ENCODE measurements at regions of chr1 and their contacts with region 1.

Region 1: DNA sequence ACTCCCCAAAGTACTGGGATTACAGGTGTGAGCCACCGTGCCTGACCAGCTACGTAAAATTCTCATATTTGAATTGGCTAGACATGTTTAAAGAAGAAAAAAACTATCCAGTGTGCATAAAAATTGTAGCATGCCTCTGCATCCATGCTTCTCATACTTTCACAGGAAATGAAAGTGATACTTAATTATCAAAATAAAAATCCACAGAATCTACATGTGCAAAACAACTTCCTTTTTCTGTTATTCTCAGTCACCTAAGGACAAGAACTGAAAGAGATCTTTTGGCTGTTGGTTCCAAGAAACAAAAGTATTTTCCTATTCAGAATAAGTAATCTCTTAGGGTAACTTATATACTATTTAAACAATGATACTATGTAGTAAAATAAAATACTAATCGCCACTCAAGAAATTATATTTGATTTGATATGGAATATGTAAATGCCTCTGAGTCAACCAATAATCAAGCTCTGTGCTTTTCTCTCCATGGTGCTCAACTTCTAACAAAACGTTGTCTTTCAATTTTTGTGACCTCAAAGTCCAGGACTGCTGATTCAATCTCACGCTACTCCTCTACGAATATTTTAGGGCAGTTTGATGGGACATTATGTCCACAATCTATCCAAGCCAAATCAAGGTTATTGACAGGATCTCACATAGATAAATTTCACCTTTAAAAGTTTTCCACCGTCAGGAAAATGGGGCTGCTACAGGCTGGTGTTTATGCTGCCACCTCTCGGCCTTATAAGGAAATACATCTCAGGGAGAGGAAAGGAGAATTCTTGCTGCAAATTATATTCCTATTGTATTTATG is 102.7 kb downstream of the ZNF281 start:
- DNase-seq: no peak
- H3K4me3 ChIP-seq: no peak overlapping the region
- H3K27ac ChIP-seq: no peak overlapping the region
- H3K27me3 ChIP-seq: no peaks in the 10 kb centered on the region
- CTCF ChIP-seq: peak; percentile 86

Region 2: GRCh38 chr1:200296091-200296661 is 11.0 kb before region 1 on chr1:
- CTCF ChIA-PET with region 1: interaction called, 35 read pairs
- POLR2A ChIA-PET with region 1: no interaction called
- DNase-seq: no peak
- H3K4me3 ChIP-seq: no peak overlapping the region
- H3K27ac ChIP-seq: no peak overlapping the region
- H3K27me3 ChIP-seq: no peaks in the 10 kb centered on the region
- CTCF ChIP-seq: no peak

Region 3: GRCh38 chr1:200342511-200343311 is 35.6 kb after region 1 on chr1:
- CTCF ChIA-PET with region 1: interaction called, 10 read pairs
- POLR2A ChIA-PET with region 1: no interaction called
- DNase-seq: no peak
- H3K4me3 ChIP-seq: no peak overlapping the region
- H3K27ac ChIP-seq: no peak overlapping the region
- H3K27me3 ChIP-seq: no peaks in the 10 kb centered on the region
- CTCF ChIP-seq: no peak

Region 4: GRCh38 chr1:200372080-200372884 is 65.1 kb after region 1 on chr1:
- CTCF ChIA-PET with region 1: interaction called, 20 read pairs
- POLR2A ChIA-PET with region 1: no interaction called
- DNase-seq: peak; percentile 27
- H3K4me3 ChIP-seq: no peak overlapping the region
- H3K27ac ChIP-seq: no peak overlapping the region
- H3K27me3 ChIP-seq: no peaks in the 10 kb centered on the region
- CTCF ChIP-seq: no peak